Endothelial cell of umbilical vein (primary cell): ENCODE measurements at regions of chr15 and their contacts with region 1.

Region 1: GRCh38 chr15:36988947-36989346 is 111.4 kb downstream of the MEIS2 start:
- DNase-seq: peak; percentile 36
- H3K4me3 ChIP-seq: no peak overlapping the region
- H3K27ac ChIP-seq: no peak overlapping the region
- H3K4me1 ChIP-seq: peaks cover 6% of the 10 kb centered on the region
- H3K27me3 ChIP-seq: no peaks in the 10 kb centered on the region
- CTCF ChIP-seq: no peak
- POLR2A ChIP-seq: no peak

Region 2: DNA sequence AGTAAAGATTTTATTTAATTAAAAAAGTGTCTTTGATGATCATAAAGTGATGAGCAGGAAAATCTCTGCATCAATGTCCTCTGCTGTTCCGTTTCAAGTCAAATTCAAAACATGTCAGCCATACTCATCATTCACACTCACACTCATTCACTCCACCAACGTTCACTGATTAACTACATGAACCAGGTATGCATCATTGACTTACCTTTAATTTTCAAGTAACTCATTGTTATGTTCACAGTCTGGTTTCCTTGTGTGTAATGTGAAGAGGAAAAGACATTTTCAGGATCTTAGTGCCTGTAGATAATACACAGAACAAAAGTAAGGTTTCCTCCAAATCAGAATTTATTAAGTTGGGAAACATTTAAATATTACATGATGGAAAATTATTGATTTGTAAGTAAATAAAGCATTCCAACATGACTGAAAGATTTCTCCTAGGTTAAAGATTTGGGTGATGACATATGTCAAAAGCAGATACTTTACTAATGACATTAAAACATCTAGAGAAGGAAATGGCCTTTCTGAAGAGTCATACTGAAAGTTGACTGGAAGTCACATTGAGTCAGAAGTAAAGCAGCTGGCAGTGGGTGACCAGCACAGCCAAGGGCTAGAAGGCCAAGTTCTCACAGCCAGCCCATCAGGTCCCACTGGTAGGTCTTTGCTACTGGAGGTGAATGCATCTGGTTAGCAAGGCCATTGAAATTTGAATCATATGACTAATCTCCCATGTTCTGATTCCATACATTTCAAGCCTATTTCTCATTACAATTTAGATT is 157.6 kb before region 1 on chr15:
- CTCF ChIA-PET with region 1: no interaction called
- POLR2A ChIA-PET with region 1: no interaction called
- dilution Hi-C with region 1: no loop called
- intact Hi-C with region 1: no loop called
- DNase-seq: no peak
- H3K4me3 ChIP-seq: no peak overlapping the region
- H3K27ac ChIP-seq: no peak overlapping the region
- H3K4me1 ChIP-seq: no peaks in the 10 kb centered on the region
- H3K27me3 ChIP-seq: peaks cover 4 to 6% of the 10 kb centered on the region in 2 experiments
- CTCF ChIP-seq: no peak
- POLR2A ChIP-seq: no peak

Region 3: GRCh38 chr15:36936613-36937012 is 52.3 kb before region 1 on chr15:
- CTCF ChIA-PET with region 1: no interaction called
- POLR2A ChIA-PET with region 1: no interaction called
- dilution Hi-C with region 1: no loop called
- intact Hi-C with region 1: no loop called
- DNase-seq: no peak
- H3K4me3 ChIP-seq: no peak overlapping the region
- H3K27ac ChIP-seq: no peak overlapping the region
- H3K4me1 ChIP-seq: no peaks in the 10 kb centered on the region
- H3K27me3 ChIP-seq: no peaks in the 10 kb centered on the region
- CTCF ChIP-seq: no peak
- POLR2A ChIP-seq: no peak

Region 4: DNA sequence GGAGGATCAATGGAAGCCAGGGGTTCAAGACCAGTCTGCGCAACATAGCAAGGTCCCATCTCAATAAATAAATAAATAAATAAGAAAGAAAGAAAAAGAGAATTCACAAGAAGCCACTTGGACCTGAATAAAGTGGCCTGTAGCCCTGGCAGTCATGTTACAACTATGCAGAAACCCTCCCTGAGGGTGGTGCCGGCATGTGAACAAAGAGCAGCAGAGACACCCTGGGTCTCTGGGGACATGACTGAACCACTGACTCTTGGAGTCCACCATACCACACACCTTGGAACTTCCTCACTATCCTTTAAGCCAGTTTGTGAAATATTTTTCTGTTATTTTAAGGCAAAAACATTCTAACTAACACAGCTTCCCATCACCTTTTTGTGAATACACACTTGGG is 18.4 kb after region 1 on chr15:
- CTCF ChIA-PET with region 1: no interaction called
- POLR2A ChIA-PET with region 1: interaction called, 10 read pairs
- dilution Hi-C with region 1: no loop called
- intact Hi-C with region 1: no loop called
- DNase-seq: no peak
- H3K4me3 ChIP-seq: no peak overlapping the region
- H3K27ac ChIP-seq: no peak overlapping the region
- H3K4me1 ChIP-seq: no peaks in the 10 kb centered on the region
- H3K27me3 ChIP-seq: no peaks in the 10 kb centered on the region
- CTCF ChIP-seq: no peak
- POLR2A ChIP-seq: no peak